CD8-positive, alpha-beta T cell (primary cell): ENCODE measurements at regions of chr6 and their contacts with region 1.

Region 1: GRCh38 chr6:28252009-28252975 is at the start of gene ZKSCAN4:
- DNase-seq: peak; percentile 64 to 92 (median 85)
- ATAC-seq: peak; percentile 92
- H3K4me3 ChIP-seq: peak within 1 kb of the TSS; percentile 85 to 94
- H3K4me3 Mint-ChIP-seq: peak within 1 kb of the TSS; percentile 98
- H3K27ac ChIP-seq: peak within 1 kb of the TSS; percentile 50 to 66
- H3K27ac Mint-ChIP-seq: peak within 1 kb of the TSS; percentile 97
- H3K4me1 ChIP-seq: peaks cover 18% of the 10 kb centered on the region
- H3K4me1 Mint-ChIP-seq: peaks cover 40% of the 10 kb centered on the region
- H3K27me3 ChIP-seq: no peaks in the 10 kb centered on the region
- H3K27me3 Mint-ChIP-seq: peaks cover 3% of the 10 kb centered on the region
- CTCF ChIP-seq: no peak
- total RNA-seq, gene ZKSCAN4: 1.4 TPM

Region 2: GRCh38 chr6:27966044-27966443 is 286.2 kb before region 1 on chr6:
- CTCF ChIA-PET with region 1: no interaction called
- POLR2A ChIA-PET with region 1: no interaction called
- intact Hi-C with region 1: no loop called
- DNase-seq: no peak
- ATAC-seq: no peak
- H3K4me3 ChIP-seq: no peak overlapping the region
- H3K4me3 Mint-ChIP-seq: no peak overlapping the region
- H3K27ac ChIP-seq: no peak overlapping the region
- H3K27ac Mint-ChIP-seq: no peak overlapping the region
- H3K4me1 ChIP-seq: no peaks in the 10 kb centered on the region
- H3K4me1 Mint-ChIP-seq: no peaks in the 10 kb centered on the region
- H3K27me3 ChIP-seq: no peaks in the 10 kb centered on the region
- H3K27me3 Mint-ChIP-seq: peaks cover 33% of the 10 kb centered on the region
- CTCF ChIP-seq: no peak

Region 3: GRCh38 chr6:28080631-28081485 is 171.4 kb before region 1 on chr6:
- CTCF ChIA-PET with region 1: no interaction called
- POLR2A ChIA-PET with region 1: no interaction called
- intact Hi-C with region 1: loop called (anchors 1 to 2 kb)
- DNase-seq: peak; percentile 86 to 96 (median 94)
- ATAC-seq: peak; percentile 74
- H3K4me3 ChIP-seq: peak overlapping the region; percentile 69 to 93
- H3K4me3 Mint-ChIP-seq: peak overlapping the region; percentile 98
- H3K27ac ChIP-seq: peak overlapping the region; percentile 91 to 96
- H3K27ac Mint-ChIP-seq: peak overlapping the region; percentile 99
- H3K4me1 ChIP-seq: peaks cover 13% of the 10 kb centered on the region
- H3K4me1 Mint-ChIP-seq: peaks cover 21% of the 10 kb centered on the region
- H3K27me3 ChIP-seq: no peaks in the 10 kb centered on the region
- H3K27me3 Mint-ChIP-seq: no peaks in the 10 kb centered on the region
- CTCF ChIP-seq: no peak

Region 4: DNA sequence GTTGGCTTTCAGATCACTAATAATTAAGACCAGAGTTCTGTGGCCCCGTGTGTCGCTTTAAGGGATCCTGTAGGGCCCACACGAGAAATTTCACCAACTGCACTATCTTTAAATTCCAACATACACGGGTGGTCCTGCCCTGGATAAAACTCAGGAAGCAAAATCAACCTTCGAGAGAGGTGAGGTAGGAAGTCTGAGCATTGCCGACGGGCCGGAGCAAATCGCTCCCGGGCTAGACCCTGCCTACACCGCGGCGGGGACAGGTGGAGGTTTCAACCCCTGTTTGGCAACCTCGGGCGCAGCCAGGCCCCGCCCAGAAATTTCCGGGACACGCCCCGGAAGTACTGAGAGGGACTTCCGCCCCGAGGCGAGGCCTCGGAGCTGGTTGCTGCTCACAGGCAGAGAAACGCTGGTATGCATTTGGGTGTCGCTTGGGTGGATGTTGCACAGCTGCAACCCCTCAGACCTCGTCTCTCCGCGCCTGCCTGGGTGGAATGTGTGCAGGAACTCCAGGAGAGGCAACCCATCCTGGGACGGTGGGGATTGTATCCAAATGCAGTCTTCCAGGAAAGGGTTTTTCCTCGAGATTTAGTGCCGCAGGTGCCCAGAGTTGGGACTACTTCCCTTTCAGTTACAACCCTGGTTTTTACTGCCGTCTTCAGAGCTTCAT is 90.7 kb before region 1 on chr6:
- CTCF ChIA-PET with region 1: no interaction called
- POLR2A ChIA-PET with region 1: no interaction called
- intact Hi-C with region 1: loop called in 1 of 2 experiments (anchors 1 kb)
- DNase-seq: peak; percentile 70 to 90 (median 83)
- ATAC-seq: peak; percentile 98
- H3K4me3 ChIP-seq: peak overlapping the region; percentile 45 to 49
- H3K4me3 Mint-ChIP-seq: peak overlapping the region; percentile 76
- H3K27ac ChIP-seq: peak overlapping the region in 1 of 2 experiments; percentile 4
- H3K27ac Mint-ChIP-seq: no peak overlapping the region
- H3K4me1 ChIP-seq: peaks cover 12% of the 10 kb centered on the region
- H3K4me1 Mint-ChIP-seq: peaks cover 15% of the 10 kb centered on the region
- H3K27me3 ChIP-seq: no peaks in the 10 kb centered on the region
- H3K27me3 Mint-ChIP-seq: peaks cover 4% of the 10 kb centered on the region
- CTCF ChIP-seq: no peak

Region 5: GRCh38 chr6:28335564-28336283 is 83.4 kb after region 1 on chr6 and contains the start of gene ZSCAN31:
- CTCF ChIA-PET with region 1: no interaction called
- POLR2A ChIA-PET with region 1: no interaction called
- intact Hi-C with region 1: loop called in 1 of 2 experiments (anchors 1 kb)
- DNase-seq: peak; percentile 64 to 94 (median 80)
- ATAC-seq: peak; percentile 86
- H3K4me3 ChIP-seq: peak within 1 kb of the TSS; percentile 77 to 85
- H3K4me3 Mint-ChIP-seq: no peak within 1 kb of the TSS
- H3K27ac ChIP-seq: peak within 1 kb of the TSS; percentile 94 to 96
- H3K27ac Mint-ChIP-seq: no peak within 1 kb of the TSS
- H3K4me1 ChIP-seq: peaks cover 15% of the 10 kb centered on the region
- H3K4me1 Mint-ChIP-seq: peaks cover 9% of the 10 kb centered on the region
- H3K27me3 ChIP-seq: no peaks in the 10 kb centered on the region
- H3K27me3 Mint-ChIP-seq: no peaks in the 10 kb centered on the region
- CTCF ChIP-seq: no peak
- total RNA-seq, gene ZSCAN31: 1.4 to 1.9 TPM

Region 6: GRCh38 chr6:28399350-28400121 is 147.2 kb after region 1 on chr6 and contains the start of gene ZSCAN12:
- CTCF ChIA-PET with region 1: no interaction called
- POLR2A ChIA-PET with region 1: no interaction called
- intact Hi-C with region 1: loop called (anchors 1 kb)
- DNase-seq: peak; percentile 76 to 92 (median 86)
- ATAC-seq: peak; percentile 96
- H3K4me3 ChIP-seq: peak within 1 kb of the TSS; percentile 87 to 96
- H3K4me3 Mint-ChIP-seq: peak within 1 kb of the TSS; percentile 93
- H3K27ac ChIP-seq: peak within 1 kb of the TSS; percentile 73 to 85
- H3K27ac Mint-ChIP-seq: peak within 1 kb of the TSS; percentile 97
- H3K4me1 ChIP-seq: peaks cover 32% of the 10 kb centered on the region
- H3K4me1 Mint-ChIP-seq: peaks cover 47% of the 10 kb centered on the region
- H3K27me3 ChIP-seq: no peaks in the 10 kb centered on the region
- H3K27me3 Mint-ChIP-seq: peaks cover 34% of the 10 kb centered on the region
- CTCF ChIP-seq: no peak
- total RNA-seq, gene ZSCAN12: 2.8 to 3.0 TPM

Region 7: GRCh38 chr6:29016559-29017427 is 764.5 kb after region 1 on chr6:
- CTCF ChIA-PET with region 1: no interaction called
- POLR2A ChIA-PET with region 1: no interaction called
- intact Hi-C with region 1: loop called in 1 of 2 experiments (anchors 5 kb)
- DNase-seq: peak; percentile 66 to 90 (median 86)
- ATAC-seq: peak; percentile 78
- H3K4me3 ChIP-seq: peak overlapping the region; percentile 52 to 62
- H3K4me3 Mint-ChIP-seq: peak overlapping the region; percentile 92
- H3K27ac ChIP-seq: no peak overlapping the region
- H3K27ac Mint-ChIP-seq: peak overlapping the region; percentile 87
- H3K4me1 ChIP-seq: peaks cover 5% of the 10 kb centered on the region
- H3K4me1 Mint-ChIP-seq: peaks cover 19% of the 10 kb centered on the region
- H3K27me3 ChIP-seq: peaks cover 0 to 11% of the 10 kb centered on the region in 2 experiments
- H3K27me3 Mint-ChIP-seq: peaks cover 21% of the 10 kb centered on the region
- CTCF ChIP-seq: peak; percentile 79